ENCODE measurements at regions of chr11 and their contacts with region 1.

Region 1: DNA sequence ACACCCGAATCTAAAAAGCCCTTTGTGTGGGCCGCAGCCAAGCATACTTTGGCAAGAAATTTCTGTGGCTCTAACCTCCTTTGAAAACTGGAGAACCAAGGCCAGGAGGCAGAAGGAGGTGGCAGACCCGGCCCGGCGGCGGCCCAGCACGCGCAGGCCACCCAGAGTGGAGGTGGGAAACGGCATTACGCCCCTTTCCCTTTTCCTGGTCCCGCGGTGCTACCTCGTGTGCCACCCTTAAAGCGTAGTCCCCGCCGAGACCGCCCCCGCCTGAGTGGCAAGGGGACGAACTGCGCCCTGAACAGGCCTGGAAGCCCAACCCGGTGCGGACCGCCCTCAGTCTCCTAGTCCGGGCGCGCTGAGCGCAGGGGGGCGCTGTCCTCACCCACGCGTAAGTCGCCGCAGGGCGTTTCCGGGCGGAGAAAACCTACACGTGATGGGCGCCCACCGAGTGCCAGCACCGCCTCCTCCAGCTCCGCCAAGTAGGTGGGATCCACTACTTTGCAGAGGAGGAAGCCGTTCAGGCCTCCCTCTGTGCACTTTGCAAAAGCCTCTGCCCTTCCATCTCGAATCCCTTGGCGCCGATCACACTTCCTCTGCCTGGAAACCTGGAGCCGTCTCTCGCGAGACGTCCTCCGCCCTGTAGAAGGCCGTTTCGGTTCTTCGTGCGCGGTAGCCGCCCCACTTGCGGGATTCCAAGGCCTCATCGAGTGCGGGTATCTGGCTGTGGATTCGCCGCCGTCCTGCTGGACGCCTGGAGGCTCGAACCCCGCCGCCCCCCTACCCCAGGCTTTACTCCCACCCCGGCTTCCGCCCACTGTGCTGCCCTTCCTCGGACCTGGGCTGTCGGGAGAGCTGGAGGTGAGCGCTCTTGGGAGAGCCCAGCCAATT is at the start of gene ACCS:
- DNase-seq: peak; percentile 100
- H3K4me3 ChIP-seq: peak within 1 kb of the TSS; percentile 50
- H3K27ac ChIP-seq: peak within 1 kb of the TSS; percentile 82
- H3K4me1 ChIP-seq: peaks cover 15% of the 10 kb centered on the region
- H3K27me3 ChIP-seq: no peaks in the 10 kb centered on the region
- CTCF ChIP-seq: peak; percentile 100
- total RNA-seq, gene ACCS: 28.4 and 35.3 TPM in 2 replicates

Region 2: GRCh38 chr11:44029977-44030911 is 35.8 kb before region 1 on chr11:
- CTCF ChIA-PET with region 1: interaction called, 12 read pairs
- POLR2A ChIA-PET with region 1: no interaction called
- intact Hi-C with region 1: no loop called
- DNase-seq: no peak
- H3K4me3 ChIP-seq: no peak overlapping the region
- H3K27ac ChIP-seq: no peak overlapping the region
- H3K4me1 ChIP-seq: no peaks in the 10 kb centered on the region
- H3K27me3 ChIP-seq: no peaks in the 10 kb centered on the region
- CTCF ChIP-seq: no peak

Region 3: DNA sequence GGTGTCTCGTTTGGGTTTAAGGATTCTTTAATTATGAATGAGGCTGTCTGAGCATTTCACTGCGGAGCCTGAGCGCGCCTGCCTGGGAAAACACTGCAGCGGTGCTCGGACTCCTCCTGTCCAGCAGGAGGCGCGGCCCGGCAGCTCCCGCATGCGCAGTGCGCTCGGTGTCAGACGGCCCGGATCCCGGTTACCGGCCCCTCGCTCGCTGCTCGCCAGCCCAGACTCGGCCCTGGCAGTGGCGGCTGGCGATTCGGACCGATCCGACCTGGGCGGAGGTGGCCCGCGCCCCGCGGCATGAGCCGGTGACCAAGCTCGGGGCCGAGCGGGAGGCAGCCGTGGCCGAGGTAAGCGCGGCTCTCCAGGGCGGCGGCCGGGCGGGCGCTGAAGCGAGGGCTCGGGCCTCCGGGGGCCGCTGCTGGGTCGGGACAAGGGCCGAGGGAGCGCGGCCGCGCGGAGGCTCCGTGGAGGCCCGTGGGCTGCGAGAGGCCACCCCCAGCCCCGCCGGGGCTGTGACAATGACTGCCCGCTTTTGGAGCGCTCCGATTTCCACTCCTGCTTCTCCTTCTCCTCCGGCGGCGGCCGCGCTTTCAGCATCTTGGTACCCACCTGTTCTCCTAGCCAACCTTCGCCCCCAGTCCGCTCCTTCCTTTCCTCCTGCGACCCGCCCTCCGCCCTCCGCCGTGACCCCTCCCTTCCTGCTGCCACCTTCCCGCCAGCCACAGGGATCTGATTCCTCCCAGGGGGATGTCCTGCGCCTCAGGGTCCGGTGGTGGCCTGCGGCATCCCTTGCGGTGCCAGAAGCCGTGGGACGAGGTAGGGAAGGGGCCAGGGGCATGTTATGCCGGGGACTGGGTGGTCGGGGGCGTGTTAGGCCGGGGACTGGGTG is 29.7 kb after region 1 on chr11 and contains the start of gene EXT2:
- CTCF ChIA-PET with region 1: interaction called, 23 read pairs
- POLR2A ChIA-PET with region 1: no interaction called
- intact Hi-C with region 1: no loop called
- DNase-seq: peak; percentile 95
- H3K4me3 ChIP-seq: peak within 1 kb of the TSS; percentile 66
- H3K27ac ChIP-seq: peak within 1 kb of the TSS; percentile 72
- H3K4me1 ChIP-seq: peaks cover 16% of the 10 kb centered on the region
- H3K27me3 ChIP-seq: no peaks in the 10 kb centered on the region
- CTCF ChIP-seq: peak; percentile 100
- total RNA-seq, gene EXT2: 123 and 128 TPM in 2 replicates

Measured in A673 (cell line).